ENCODE measurements at regions of chr9 and their contacts with region 1.

Region 1: GRCh38 chr9:98607787-98608186 is 100.9 kb downstream of the GABBR2 start:
- DNase-seq: peak; percentile 91
- H3K4me3 ChIP-seq: peak overlapping the region in 1 of 3 experiments; percentile 26
- H3K27ac ChIP-seq: peak overlapping the region; percentile 97
- H3K4me1 ChIP-seq: peaks cover 30% of the 10 kb centered on the region
- H3K27me3 ChIP-seq: no peaks in the 10 kb centered on the region
- CTCF ChIP-seq: no peak
- POLR2A ChIP-seq: no peak

Region 2: GRCh38 chr9:98625728-98626127 is 17.9 kb after region 1 on chr9:
- CTCF ChIA-PET with region 1: interaction called, 7 read pairs
- POLR2A ChIA-PET with region 1: no interaction called
- dilution Hi-C with region 1: no loop called
- intact Hi-C with region 1: loop called (anchors 1 kb)
- DNase-seq: no peak
- H3K4me3 ChIP-seq: no peak overlapping the region
- H3K27ac ChIP-seq: no peak overlapping the region
- H3K4me1 ChIP-seq: no peaks in the 10 kb centered on the region
- H3K27me3 ChIP-seq: no peaks in the 10 kb centered on the region
- CTCF ChIP-seq: no peak
- POLR2A ChIP-seq: no peak

Region 3: GRCh38 chr9:98742325-98743280 is 134.8 kb after region 1 on chr9:
- CTCF ChIA-PET with region 1: no interaction called
- POLR2A ChIA-PET with region 1: no interaction called
- dilution Hi-C with region 1: no loop called
- intact Hi-C with region 1: no loop called
- DNase-seq: no peak
- H3K4me3 ChIP-seq: no peak overlapping the region
- H3K27ac ChIP-seq: no peak overlapping the region
- H3K4me1 ChIP-seq: no peaks in the 10 kb centered on the region
- H3K27me3 ChIP-seq: no peaks in the 10 kb centered on the region
- CTCF ChIP-seq: no peak
- POLR2A ChIP-seq: no peak